Activated CD4-positive, alpha-beta T cell treated with anti-CD3 and anti-CD28 coated beads, Interleukin-2, amount 10 ng/mL, durations not matched to agents 24 days and 14 days (primary cell): ENCODE measurements at regions of chr1 and their contacts with region 1.

Region 1: DNA sequence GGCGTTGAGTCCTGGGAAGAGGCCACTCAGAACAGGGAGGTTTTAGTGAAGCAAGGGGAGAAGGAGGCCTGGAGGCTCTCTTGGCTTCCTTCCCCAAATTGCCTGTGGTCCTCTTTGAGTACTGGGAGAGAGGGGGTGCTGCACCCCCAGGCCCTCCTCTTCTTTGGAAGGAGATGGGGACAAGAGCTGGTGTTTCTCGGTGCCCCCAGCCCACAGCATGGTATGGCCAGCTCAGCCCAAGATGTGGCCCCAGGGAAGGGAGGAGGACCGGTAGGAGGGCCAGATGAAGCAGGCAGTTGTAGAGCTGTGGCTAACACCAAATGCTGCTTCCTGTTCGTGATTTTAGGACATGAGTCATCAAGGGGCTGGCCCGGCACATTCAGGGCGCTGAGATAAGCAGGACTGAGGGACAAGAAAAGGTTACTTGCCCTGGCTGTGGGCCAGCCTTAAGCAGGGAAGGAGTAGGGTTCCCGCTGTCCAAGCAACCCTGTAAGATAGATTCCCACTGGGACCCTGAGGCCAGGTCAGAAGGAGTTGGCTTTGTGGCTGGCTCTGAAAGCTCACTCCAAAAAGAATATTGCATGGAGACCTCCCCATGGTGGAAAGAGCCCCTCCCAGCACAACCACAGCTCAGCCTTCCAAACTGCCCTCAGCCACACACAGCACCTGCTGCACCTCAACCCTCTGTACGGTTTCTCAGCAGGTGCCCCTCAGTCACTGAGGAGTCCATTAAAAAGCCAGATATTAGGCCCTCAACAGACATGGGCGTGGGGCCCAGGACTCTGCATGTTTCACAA is 4.9 kb upstream of the TNFRSF1B start:
- DNase-seq: peak; percentile 93
- H3K4me3 Mint-ChIP-seq: peak overlapping the region; percentile 76
- H3K27ac Mint-ChIP-seq: peak overlapping the region; percentile 95
- H3K4me1 Mint-ChIP-seq: peaks cover 77% of the 10 kb centered on the region
- H3K27me3 Mint-ChIP-seq: no peaks in the 10 kb centered on the region

Region 2: GRCh38 chr1:11590395-11590794 is 571.5 kb before region 1 on chr1:
- intact Hi-C with region 1: no loop called
- DNase-seq: no peak
- H3K4me3 Mint-ChIP-seq: no peak overlapping the region
- H3K27ac Mint-ChIP-seq: no peak overlapping the region
- H3K4me1 Mint-ChIP-seq: no peaks in the 10 kb centered on the region
- H3K27me3 Mint-ChIP-seq: peaks cover 7% of the 10 kb centered on the region

Region 3: DNA sequence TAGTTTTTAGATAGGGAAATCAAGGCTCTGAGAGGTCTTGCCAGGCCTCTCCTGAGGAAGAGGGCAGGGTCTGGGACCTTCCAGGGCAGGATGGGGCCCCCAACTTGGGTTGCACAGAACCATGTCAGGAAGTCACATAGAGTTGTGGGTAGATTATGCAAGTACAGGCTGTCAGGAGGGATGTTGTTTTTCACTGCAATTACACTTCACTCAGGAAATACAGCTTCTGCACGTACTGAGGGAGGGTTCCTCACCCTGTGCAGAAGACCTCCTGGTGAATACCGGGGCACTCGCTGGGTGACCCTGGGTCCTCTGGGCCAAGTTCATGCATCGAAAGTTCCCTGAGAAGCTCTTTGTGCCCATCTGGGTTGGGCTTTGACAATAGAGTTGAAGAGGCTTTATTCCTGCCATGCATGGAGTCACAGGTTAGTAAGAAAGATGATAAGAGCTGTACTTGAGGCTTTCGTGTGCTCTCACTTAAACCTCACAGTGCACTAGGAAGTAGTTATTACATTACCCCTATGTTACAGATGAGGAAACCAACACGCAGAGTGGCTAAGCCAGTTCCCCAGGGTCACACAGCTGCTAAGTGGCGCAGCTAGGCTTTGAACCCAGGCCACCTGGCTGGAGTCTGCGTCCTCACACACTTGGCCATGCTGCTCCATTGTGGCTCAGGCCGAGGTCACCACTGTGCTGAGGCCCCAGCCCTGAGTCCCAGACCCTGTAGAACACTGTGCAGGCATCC is 11.2 kb before region 1 on chr1:
- intact Hi-C with region 1: loop called (anchors 1 kb)
- DNase-seq: peak; percentile 84
- H3K4me3 Mint-ChIP-seq: peak overlapping the region; percentile 73
- H3K27ac Mint-ChIP-seq: peak overlapping the region; percentile 91
- H3K4me1 Mint-ChIP-seq: peaks cover 83% of the 10 kb centered on the region
- H3K27me3 Mint-ChIP-seq: no peaks in the 10 kb centered on the region

Region 4: DNA sequence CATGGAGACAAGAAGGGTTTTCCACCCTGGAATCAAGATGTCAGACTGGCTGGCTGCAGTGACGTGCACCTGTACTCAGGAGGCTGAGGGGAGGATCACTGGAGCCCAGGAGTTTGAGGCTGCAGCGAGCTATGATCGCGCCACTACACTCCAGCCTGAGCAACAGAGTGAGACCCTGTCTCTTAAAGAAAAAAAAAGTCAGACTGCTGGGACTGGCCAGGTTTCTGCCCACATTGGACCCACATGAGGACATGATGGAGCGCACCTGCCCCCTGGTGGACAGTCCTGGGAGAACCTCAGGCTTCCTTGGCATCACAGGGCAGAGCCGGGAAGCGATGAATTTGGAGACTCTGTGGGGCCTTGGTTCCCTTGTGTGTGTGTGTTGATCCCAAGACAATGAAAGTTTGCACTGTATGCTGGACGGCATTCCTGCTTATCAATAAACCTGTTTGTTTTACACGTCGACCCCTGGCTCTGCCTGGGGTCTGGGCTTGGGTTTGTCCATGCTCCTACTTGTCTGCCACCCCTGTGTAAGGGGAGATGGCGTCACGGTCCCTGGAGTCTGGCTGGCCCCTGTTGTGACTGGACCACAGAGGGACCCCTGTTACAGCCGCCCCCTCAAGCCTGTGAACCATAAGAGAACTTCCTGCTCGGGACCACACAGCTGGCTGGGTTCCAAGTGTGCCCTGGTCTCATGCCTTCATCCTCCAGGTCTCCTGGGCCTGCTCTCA is 47.1 kb after region 1 on chr1:
- intact Hi-C with region 1: loop called (anchors 2 kb)
- DNase-seq: peak; percentile 95
- H3K4me3 Mint-ChIP-seq: no peak overlapping the region
- H3K27ac Mint-ChIP-seq: peak overlapping the region; percentile 59
- H3K4me1 Mint-ChIP-seq: peaks cover 38% of the 10 kb centered on the region
- H3K27me3 Mint-ChIP-seq: peaks cover 2% of the 10 kb centered on the region